ENCODE measurements at regions of chr16 and their contacts with region 1.

Region 1: GRCh38 chr16:3611146-3611975 is at the start of gene SLX4:
- DNase-seq: peak; percentile 95
- ATAC-seq: peak; percentile 90
- H3K4me3 Mint-ChIP-seq: peak within 1 kb of the TSS; percentile 100
- H3K27ac Mint-ChIP-seq: peak within 1 kb of the TSS; percentile 98
- H3K4me1 Mint-ChIP-seq: peaks cover 41% of the 10 kb centered on the region
- H3K27me3 Mint-ChIP-seq: no peaks in the 10 kb centered on the region
- total RNA-seq, gene SLX4: 10.7 to 11.7 TPM

Region 2: GRCh38 chr16:3264137-3265036 is 347.0 kb before region 1 on chr16:
- CTCF ChIA-PET with region 1: interaction called, 3 read pairs
- POLR2A ChIA-PET with region 1: no interaction called
- intact Hi-C with region 1: loop called in 1 of 2 experiments (anchors 1 kb)
- DNase-seq: peak; percentile 99
- ATAC-seq: peak; percentile 95
- H3K4me3 Mint-ChIP-seq: peak overlapping the region; percentile 83
- H3K27ac Mint-ChIP-seq: peak overlapping the region; percentile 90
- H3K4me1 Mint-ChIP-seq: peaks cover 25% of the 10 kb centered on the region
- H3K27me3 Mint-ChIP-seq: no peaks in the 10 kb centered on the region

Region 3: DNA sequence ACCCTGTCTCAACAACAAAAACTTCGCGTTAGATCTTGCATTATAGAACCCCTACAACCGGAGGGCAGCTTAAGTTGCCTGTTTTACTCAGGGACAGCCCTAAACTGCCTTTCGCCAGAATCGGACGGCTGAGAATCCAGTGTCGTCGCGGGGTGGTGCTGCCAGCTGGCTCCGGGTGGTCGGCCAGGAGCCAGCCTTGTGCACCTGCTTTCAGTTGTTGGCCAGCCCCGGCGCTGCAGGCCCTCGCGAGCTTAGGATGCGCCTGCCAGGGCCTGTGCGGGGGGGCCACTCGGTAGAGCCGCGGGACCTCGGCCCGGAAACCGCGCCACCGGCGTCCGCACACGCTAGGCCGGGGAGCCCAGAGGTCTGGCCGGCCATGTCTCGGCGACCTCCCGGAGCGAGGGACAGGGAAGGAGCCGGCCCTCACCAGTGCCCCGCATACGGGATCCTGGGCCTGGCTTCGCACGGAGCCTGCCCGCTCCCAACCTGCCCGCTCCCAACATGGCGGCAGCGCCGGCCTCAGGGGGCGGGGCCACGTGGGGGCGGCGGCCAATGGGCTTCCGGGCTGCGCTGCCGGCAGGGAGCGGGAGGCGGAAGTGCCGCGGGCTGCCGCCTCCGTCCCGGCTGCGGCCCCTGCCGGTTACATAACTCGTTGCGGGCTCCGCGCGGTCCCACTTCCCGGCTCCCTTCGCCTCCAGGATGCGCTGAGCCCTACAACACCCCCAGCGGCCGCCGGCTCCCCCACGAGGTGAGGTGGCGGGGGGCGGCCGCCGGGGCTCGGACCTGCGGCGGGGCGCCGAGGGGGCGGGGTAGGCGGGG is 153.7 kb before region 1 on chr16:
- CTCF ChIA-PET with region 1: no interaction called
- POLR2A ChIA-PET with region 1: no interaction called
- intact Hi-C with region 1: loop called in 1 of 2 experiments (anchors 1 kb)
- DNase-seq: peak; percentile 93
- ATAC-seq: peak; percentile 86
- H3K4me3 Mint-ChIP-seq: peak overlapping the region; percentile 74
- H3K27ac Mint-ChIP-seq: peak overlapping the region; percentile 83
- H3K4me1 Mint-ChIP-seq: peaks cover 41% of the 10 kb centered on the region
- H3K27me3 Mint-ChIP-seq: no peaks in the 10 kb centered on the region

Region 4: GRCh38 chr16:3509470-3509928 is 101.9 kb before region 1 on chr16:
- CTCF ChIA-PET with region 1: no interaction called
- POLR2A ChIA-PET with region 1: no interaction called
- intact Hi-C with region 1: no loop called
- DNase-seq: peak; percentile 92
- ATAC-seq: peak; percentile 86
- H3K4me3 Mint-ChIP-seq: peak overlapping the region; percentile 8
- H3K27ac Mint-ChIP-seq: peak overlapping the region; percentile 91
- H3K4me1 Mint-ChIP-seq: peaks cover 54% of the 10 kb centered on the region
- H3K27me3 Mint-ChIP-seq: no peaks in the 10 kb centered on the region

Region 5: GRCh38 chr16:3578610-3579551 is 32.5 kb before region 1 on chr16:
- CTCF ChIA-PET with region 1: no interaction called
- POLR2A ChIA-PET with region 1: no interaction called
- intact Hi-C with region 1: loop called (anchors 1 to 5 kb)
- DNase-seq: peak; percentile 82
- ATAC-seq: peak; percentile 68
- H3K4me3 Mint-ChIP-seq: peak overlapping the region; percentile 95
- H3K27ac Mint-ChIP-seq: peak overlapping the region; percentile 97
- H3K4me1 Mint-ChIP-seq: peaks cover 45% of the 10 kb centered on the region
- H3K27me3 Mint-ChIP-seq: no peaks in the 10 kb centered on the region

Region 6: DNA sequence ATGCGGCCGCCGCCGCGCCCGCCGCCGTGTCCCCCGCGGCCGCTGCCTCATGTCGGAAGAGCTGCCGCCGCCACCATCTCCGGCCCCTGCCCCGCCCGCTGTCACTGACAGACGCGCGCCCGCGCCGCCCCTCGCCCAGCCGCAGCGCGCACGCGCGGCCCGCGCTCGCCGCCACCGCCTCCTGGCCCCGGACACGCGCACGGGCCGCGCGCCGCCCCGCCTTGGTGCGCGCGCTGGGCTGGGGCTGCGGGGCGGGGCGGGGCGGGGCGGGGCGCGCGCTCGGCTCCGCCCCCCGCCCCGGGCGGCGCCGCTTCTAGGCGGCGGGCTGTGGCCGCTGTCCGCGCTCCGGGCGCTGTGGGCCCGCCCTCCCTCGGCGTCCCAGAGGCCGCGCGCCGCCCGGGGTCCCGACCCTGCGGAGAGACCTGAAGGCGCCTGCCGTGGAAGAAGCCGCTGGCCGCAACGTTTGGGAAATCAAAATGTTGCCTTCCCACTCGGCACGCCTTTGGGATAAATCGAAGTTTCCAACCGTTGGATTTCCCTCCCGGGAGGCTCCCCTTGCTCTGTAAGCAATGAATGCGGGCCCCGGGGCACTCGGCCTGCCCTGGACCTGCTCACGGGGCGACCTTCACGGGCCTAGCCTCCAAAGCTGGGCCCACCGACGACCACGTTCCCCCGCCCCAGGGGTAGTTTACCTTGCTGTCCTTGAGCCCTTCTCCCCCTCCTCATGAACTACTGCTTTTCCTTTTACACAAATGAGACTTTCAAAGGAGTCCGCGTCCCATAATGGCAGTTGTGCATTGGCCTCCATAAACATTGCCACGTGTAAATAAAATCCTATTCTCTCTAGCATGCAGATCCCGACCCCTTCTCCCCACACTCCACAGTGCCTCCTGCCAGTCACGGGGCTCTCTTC is 505.2 kb after region 1 on chr16 and contains the start of gene ADCY9:
- CTCF ChIA-PET with region 1: no interaction called
- POLR2A ChIA-PET with region 1: no interaction called
- intact Hi-C with region 1: loop called in 1 of 2 experiments (anchors 2 kb)
- DNase-seq: peak; percentile 86
- ATAC-seq: peak; percentile 75
- H3K4me3 Mint-ChIP-seq: peak within 1 kb of the TSS; percentile 78
- H3K27ac Mint-ChIP-seq: peak within 1 kb of the TSS; percentile 78
- H3K4me1 Mint-ChIP-seq: peaks cover 36% of the 10 kb centered on the region
- H3K27me3 Mint-ChIP-seq: peaks cover 7% of the 10 kb centered on the region
- total RNA-seq, gene ADCY9: 5.3 to 6.2 TPM

Measured in activated CD4-positive, alpha-beta T cell treated with anti-CD3 and anti-CD28 coated beads for 36 hours (primary cell).